GM10248 (cell line): ENCODE measurements at regions of chr10 and their contacts with region 1.

Region 1: GRCh38 chr10:62816331-62817120 is at the start of gene EGR2:
- DNase-seq: peak; percentile 93
- CTCF ChIP-seq: no peak

Region 2: GRCh38 chr10:62437696-62438095 is 378.8 kb before region 1 on chr10:
- CTCF ChIA-PET with region 1: interaction called, 15 read pairs
- POLR2A ChIA-PET with region 1: no interaction called
- DNase-seq: peak; percentile 30
- CTCF ChIP-seq: peak; percentile 68

Region 3: GRCh38 chr10:62599161-62599560 is 217.4 kb before region 1 on chr10:
- CTCF ChIA-PET with region 1: interaction called, 59 read pairs
- POLR2A ChIA-PET with region 1: no interaction called
- DNase-seq: no peak
- CTCF ChIP-seq: no peak

Region 4: GRCh38 chr10:62637249-62638061 is 179.1 kb before region 1 on chr10:
- CTCF ChIA-PET with region 1: interaction called, 15 read pairs
- POLR2A ChIA-PET with region 1: interaction called, 6 read pairs
- DNase-seq: peak; percentile 26
- CTCF ChIP-seq: no peak

Region 5: DNA sequence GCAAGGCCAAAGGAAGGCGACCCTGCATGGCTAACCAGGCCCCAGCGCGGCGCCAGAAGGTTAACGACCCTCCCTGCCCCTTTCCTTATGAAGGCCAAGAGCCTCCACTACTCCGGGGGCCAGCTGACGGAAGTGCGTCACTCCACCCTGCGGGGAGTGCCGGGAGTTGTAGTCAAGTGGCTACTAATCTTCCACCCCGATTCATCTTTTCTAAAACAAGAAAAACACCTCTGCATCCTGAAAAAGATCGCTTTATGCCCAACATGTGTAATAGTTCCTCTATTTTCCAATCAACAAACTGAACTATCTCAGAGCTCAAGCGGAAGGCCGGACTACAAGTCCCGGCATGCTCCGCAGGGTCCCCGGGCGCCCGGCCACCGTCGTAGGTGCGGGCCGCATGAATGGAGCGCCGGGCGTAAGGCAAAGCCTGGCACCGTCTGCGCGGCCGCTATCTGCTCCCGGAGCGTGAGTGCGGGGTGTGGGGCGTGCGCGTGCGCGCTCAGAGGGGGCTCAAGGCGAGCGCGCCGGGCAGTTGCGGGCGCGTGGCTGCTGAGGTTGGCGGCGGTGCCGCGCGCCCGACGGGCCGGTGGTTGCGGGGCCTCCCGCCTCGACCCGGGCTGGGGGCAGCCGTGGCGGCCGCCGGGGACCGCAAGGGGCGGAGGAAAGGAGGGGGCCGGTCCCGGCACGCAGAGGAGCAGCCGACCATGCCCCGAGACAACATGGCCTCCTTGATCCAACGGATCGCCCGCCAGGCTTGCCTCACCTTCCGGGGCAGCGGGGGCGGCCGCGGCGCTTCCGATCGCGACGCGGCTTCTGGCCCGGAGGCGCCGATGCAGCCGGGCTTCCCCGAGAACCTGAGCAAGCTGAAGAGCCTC is 11.9 kb before region 1 on chr10 and contains the start of gene ADO:
- CTCF ChIA-PET with region 1: interaction called, 18 read pairs
- POLR2A ChIA-PET with region 1: no interaction called
- DNase-seq: peak; percentile 87
- CTCF ChIP-seq: no peak

Region 6: GRCh38 chr10:62842983-62843382 is 26.5 kb after region 1 on chr10:
- CTCF ChIA-PET with region 1: interaction called, 11 read pairs
- POLR2A ChIA-PET with region 1: interaction called, 3 read pairs
- DNase-seq: no peak
- CTCF ChIP-seq: no peak